Vagina (tissue), 2 donors: ENCODE measurements at regions of chr7 and their contacts with region 1.

Region 1: DNA sequence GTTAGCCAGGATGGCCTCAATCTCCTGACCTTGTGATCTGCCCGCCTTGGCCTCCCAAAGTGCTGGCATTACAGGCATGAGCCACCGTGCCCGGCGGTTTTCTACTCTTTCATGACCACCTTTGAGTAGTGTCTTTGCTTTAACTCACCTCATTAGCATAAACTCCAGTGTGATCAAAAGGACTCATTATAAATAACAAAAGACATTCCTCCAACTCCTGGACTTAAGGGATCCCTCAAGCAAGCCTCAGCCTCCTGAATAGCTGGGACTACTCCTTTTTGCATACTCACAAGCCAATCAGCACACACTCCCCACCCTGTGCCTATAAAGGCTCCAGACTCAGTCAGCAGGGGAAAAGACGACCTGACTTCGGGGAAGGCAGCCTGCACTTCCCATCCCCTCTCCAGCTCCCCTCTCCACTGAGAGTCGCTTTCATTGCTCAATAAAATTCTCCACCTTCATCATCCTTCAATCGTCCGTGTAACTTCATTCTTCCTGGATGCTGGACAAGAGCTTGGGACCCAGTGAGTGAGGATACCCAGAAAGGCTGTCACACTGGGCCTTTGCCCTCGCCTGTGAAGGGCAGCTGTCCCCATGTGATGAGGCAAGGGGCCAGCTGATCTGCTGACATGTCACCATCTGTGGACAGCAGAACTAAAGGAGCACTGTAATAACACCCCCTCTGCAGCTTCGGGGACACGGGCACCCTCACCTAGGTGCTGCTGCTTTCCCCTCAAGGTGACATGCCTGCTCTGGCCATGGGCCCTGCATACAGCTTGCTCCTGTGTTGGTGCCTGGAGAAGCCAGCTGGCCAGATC is 34.9 kb upstream of the EIF4H start:
- DNase-seq: no peak
- H3K4me3 ChIP-seq: no peak overlapping the region
- H3K27ac ChIP-seq: no peak overlapping the region
- H3K4me1 ChIP-seq: no peaks in the 10 kb centered on the region
- H3K27me3 ChIP-seq: no peaks in the 10 kb centered on the region
- CTCF ChIP-seq: no peak
- POLR2A ChIP-seq: no peak

Region 2: DNA sequence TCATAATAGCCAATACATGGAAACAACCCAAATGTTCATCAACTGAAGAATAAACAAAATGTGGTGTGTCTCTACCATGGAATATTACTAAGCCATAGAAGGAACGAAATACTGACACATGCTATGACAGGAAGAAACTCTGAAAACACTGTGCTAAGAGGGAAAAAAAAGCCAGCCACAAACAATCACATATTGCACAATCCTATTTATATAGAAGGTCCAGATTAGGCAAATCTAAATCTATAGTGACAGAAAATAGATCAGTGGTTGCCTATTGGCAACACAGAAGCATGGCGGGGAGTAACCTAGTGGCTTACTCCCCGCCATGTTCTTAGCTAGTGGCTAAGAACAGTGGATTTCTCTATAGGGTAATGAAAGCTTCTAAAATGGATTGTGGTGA is 1956.7 kb after region 1 on chr7:
- intact Hi-C with region 1: loop called (anchors 5 kb)
- DNase-seq: no peak
- H3K4me3 ChIP-seq: no peak overlapping the region
- H3K27ac ChIP-seq: no peak overlapping the region
- H3K4me1 ChIP-seq: no peaks in the 10 kb centered on the region
- H3K27me3 ChIP-seq: no peaks in the 10 kb centered on the region
- CTCF ChIP-seq: no peak
- POLR2A ChIP-seq: no peak